ENCODE measurements at regions of chr21 and their contacts with region 1.

Region 1: GRCh38 chr21:21163904-21164303 is 165.7 kb downstream of the NCAM2 start:
- DNase-seq: no peak
- ATAC-seq: peak; percentile 64

Region 2: DNA sequence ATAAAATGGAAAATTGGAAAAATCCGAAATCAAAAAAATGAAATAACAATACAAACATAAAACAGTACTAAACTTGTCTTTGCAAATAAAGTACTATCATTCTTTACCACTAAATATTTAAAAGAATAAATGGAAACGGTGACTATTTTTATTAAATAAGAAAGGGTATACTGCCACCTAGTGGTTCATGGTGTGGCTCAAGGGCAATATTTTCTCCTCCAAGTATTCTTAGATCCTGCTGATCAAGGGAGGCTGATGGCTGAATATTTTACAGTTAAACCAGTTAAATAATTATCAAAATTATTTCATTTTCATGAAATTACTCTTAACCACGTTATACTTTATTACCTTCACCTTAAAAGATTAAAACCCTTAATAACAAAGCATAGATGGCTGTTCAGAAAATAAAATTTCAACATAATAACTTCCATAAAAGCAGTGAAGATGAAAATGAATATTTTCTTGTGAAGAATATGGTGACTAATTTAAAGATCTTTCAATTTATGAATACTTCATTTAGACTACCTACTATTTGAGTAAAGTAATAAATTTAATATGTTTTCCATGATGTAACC is 1628.2 kb after region 1 on chr21:
- intact Hi-C with region 1: loop called (anchors 10 kb)
- DNase-seq: no peak
- ATAC-seq: no peak

Measured in Right ventricle myocardium superior (tissue), 1 donor.